MCF 10A (cell line): ENCODE measurements at regions of chr10 and their contacts with region 1.

Region 1: GRCh38 chr10:49761789-49762565 is at the start of gene OGDHL:
- DNase-seq: peak; percentile 54
- H3K4me3 Mint-ChIP-seq: peak within 1 kb of the TSS; percentile 62
- H3K27ac Mint-ChIP-seq: no peak within 1 kb of the TSS
- H3K4me1 Mint-ChIP-seq: peaks cover 6% of the 10 kb centered on the region
- H3K27me3 Mint-ChIP-seq: peaks cover 36% of the 10 kb centered on the region
- CTCF ChIP-seq: no peak
- total RNA-seq, gene OGDHL: 0.22 and 0.28 TPM in 2 replicates

Region 2: GRCh38 chr10:49606981-49607535 is 154.9 kb before region 1 on chr10:
- CTCF ChIA-PET with region 1: no interaction called
- POLR2A ChIA-PET with region 1: no interaction called
- intact Hi-C with region 1: loop called (anchors 10 kb)
- DNase-seq: peak; percentile 67
- H3K4me3 Mint-ChIP-seq: no peak overlapping the region
- H3K27ac Mint-ChIP-seq: no peak overlapping the region
- H3K4me1 Mint-ChIP-seq: peaks cover 11% of the 10 kb centered on the region
- H3K27me3 Mint-ChIP-seq: peaks cover 63% of the 10 kb centered on the region
- CTCF ChIP-seq: no peak